Activated CD4-positive, alpha-beta T cell treated with anti-CD3 and anti-CD28 coated beads for 36 hours (primary cell): ENCODE measurements at regions of chr21 and their contacts with region 1.

Region 1: DNA sequence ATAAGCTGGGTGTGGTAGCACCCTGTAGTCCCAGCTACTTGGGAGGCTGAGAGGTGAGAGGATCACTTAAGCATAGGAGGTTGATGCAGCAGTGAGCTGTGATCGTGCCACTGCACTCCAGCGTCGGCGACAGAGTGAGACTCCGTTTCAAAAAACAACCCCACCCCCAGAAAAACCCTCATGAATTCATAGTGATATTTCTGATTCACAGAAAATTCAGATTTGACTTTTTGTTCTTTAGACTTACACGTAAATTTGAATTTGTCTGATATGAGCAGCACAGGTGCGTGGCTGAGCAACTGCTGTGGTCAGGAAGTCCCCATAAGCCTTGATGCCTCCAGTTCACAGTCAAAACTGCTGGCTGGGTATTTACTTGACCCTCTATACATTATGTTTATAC is 10.0 kb upstream of the MORC3 start:
- DNase-seq: peak; percentile 83
- ATAC-seq: peak; percentile 99
- H3K4me3 Mint-ChIP-seq: no peak overlapping the region
- H3K27ac Mint-ChIP-seq: peak overlapping the region; percentile 79
- H3K4me1 Mint-ChIP-seq: peaks cover 7% of the 10 kb centered on the region
- H3K27me3 Mint-ChIP-seq: no peaks in the 10 kb centered on the region

Region 2: DNA sequence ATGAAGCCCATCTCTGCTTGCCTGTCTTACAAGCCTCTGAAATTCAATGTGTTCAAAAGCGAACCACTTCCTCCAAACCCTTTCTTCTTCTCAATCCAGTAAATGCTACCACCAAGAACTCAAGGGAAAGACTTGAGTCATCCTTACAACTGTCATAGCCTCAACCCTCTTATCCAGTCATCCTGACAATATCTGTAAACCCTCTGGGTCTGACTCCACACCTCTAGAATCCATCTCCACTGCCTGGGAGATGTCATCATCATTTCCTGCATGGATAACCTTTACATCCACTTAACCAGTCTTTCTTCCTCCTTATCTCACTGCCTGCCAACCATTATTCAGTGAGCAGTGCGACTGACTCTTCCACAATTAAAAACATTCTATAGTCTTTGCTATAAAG is 690.8 kb before region 1 on chr21:
- CTCF ChIA-PET with region 1: no interaction called
- POLR2A ChIA-PET with region 1: no interaction called
- intact Hi-C with region 1: no loop called
- DNase-seq: no peak
- ATAC-seq: peak; percentile 60
- H3K4me3 Mint-ChIP-seq: no peak overlapping the region
- H3K27ac Mint-ChIP-seq: no peak overlapping the region
- H3K4me1 Mint-ChIP-seq: peaks cover 6% of the 10 kb centered on the region
- H3K27me3 Mint-ChIP-seq: peaks cover 8% of the 10 kb centered on the region

Region 3: GRCh38 chr21:36297921-36298594 is 12.0 kb before region 1 on chr21:
- CTCF ChIA-PET with region 1: interaction called, 4 read pairs
- POLR2A ChIA-PET with region 1: interaction called, 15 read pairs
- intact Hi-C with region 1: loop called (anchors 1 kb)
- DNase-seq: peak; percentile 80
- ATAC-seq: peak; percentile 96
- H3K4me3 Mint-ChIP-seq: peak overlapping the region; percentile 57
- H3K27ac Mint-ChIP-seq: peak overlapping the region; percentile 90
- H3K4me1 Mint-ChIP-seq: peaks cover 47% of the 10 kb centered on the region
- H3K27me3 Mint-ChIP-seq: no peaks in the 10 kb centered on the region

Region 4: GRCh38 chr21:36330904-36331303 is 20.9 kb after region 1 on chr21:
- CTCF ChIA-PET with region 1: no interaction called
- POLR2A ChIA-PET with region 1: no interaction called
- intact Hi-C with region 1: no loop called
- DNase-seq: peak; percentile 67
- ATAC-seq: peak; percentile 92
- H3K4me3 Mint-ChIP-seq: no peak overlapping the region
- H3K27ac Mint-ChIP-seq: no peak overlapping the region
- H3K4me1 Mint-ChIP-seq: peaks cover 42% of the 10 kb centered on the region
- H3K27me3 Mint-ChIP-seq: no peaks in the 10 kb centered on the region